ENCODE measurements at regions of chr3 and their contacts with region 1.

Region 1: GRCh38 chr3:183766745-183767606 is 58.4 kb downstream of the MAP6D1 start:
- DNase-seq: peak in 9 of 10 donors; percentile 66 to 86 (median 74)
- H3K4me3 ChIP-seq: peak overlapping the region in 1 of 59 donors; percentile 10
- H3K27ac ChIP-seq: peak overlapping the region in 46 of 59 donors; percentile 0 to 80 (median 58)
- H3K27me3 ChIP-seq: no peaks in the 10 kb centered on the region
- CTCF ChIP-seq: peak; percentile 66 to 93 (median 84)

Region 2: DNA sequence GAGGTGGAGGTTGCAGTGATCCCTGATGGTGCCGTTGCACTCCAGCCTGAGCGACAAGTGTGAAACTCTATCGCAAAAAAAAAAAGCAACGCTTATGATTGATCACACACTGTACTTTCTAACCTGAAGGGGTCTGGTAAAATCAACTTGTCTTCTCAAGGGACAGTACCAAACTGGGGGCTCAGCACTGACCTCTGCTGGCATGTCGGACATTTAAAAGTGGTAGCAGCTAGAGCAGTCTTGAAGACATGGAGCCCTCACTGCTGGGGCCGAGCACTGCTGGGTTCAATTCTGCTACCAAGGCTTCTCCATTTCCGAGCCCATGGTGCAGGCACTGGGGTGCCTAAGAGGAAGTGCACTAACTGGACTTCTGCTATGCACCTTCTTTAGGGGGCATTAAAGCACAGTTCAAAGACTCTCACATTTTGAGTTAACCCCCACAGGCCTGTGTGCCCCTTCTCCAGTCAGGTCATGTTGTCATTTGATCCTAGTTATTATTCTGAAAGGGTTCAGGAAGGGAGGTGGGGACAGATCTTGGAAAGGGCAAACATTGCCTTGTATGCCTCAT is 578.0 kb before region 1 on chr3:
- intact Hi-C with region 1: loop called in 1 of 2 experiments (anchors 10 kb)
- DNase-seq: peak in 5 of 10 donors; percentile 19 to 60 (median 54)
- H3K4me3 ChIP-seq: no peak overlapping the region
- H3K27ac ChIP-seq: peak overlapping the region in 1 of 59 donors; percentile 7
- H3K27me3 ChIP-seq: no peaks in the 10 kb centered on the region
- CTCF ChIP-seq: peak in 50 of 56 donors; percentile 11 to 57 (median 40)

Region 3: DNA sequence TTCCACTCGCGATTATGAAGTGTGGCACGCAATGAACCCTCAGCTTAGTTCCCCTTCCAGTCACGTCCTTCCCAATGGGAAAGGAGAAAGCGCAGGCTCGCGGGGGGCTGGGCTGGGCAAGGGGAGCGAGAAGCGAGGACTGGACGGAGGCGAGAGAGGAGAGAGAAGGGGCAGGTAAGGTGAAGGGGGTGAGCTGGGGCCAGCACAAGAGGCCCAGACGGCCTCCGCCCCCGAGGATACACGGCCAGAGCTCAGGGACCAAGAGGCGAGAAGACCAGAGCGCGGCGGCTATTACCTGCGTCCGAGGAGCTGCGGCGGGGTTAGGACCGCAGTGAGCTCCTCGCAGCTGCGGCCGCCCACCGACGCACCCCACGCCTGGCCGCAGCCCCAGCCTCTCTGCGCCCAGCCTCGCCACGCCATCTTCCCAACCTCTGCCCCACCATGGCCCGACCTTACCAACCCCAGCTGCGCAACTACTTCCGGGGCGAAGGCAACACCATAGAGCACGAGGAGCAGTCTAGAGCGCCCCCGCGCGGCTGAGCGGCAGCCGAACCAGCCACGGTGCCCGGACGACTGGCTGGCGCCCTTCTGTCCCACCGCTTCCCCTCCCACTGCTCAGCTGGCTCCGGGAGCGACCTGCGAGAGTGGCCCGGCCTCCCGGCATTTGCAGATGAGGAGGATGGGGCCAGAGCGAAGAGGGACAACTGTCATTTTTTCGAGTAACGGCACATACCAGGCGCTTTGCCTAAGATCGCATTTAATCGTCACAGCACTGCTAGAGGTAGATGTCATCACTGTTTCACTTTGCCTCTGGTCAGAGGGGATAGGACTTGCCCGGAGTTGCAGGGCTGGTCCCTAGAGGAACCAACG is 117.7 kb after region 1 on chr3 and contains the start of gene PARL:
- intact Hi-C with region 1: loop called in 1 of 2 experiments (anchors 5 kb)
- DNase-seq: peak; percentile 94 to 97 (median 96)
- H3K4me3 ChIP-seq: peak within 1 kb of the TSS; percentile 57 to 100 (median 94)
- H3K27ac ChIP-seq: peak within 1 kb of the TSS in 58 of 59 donors; percentile 4 to 91 (median 80)
- H3K27me3 ChIP-seq: no peaks in the 10 kb centered on the region
- CTCF ChIP-seq: peak; percentile 93 to 100 (median 98)
- total RNA-seq, gene PARL: 21.2 to 63.1 (median 43.9) TPM

Region 4: DNA sequence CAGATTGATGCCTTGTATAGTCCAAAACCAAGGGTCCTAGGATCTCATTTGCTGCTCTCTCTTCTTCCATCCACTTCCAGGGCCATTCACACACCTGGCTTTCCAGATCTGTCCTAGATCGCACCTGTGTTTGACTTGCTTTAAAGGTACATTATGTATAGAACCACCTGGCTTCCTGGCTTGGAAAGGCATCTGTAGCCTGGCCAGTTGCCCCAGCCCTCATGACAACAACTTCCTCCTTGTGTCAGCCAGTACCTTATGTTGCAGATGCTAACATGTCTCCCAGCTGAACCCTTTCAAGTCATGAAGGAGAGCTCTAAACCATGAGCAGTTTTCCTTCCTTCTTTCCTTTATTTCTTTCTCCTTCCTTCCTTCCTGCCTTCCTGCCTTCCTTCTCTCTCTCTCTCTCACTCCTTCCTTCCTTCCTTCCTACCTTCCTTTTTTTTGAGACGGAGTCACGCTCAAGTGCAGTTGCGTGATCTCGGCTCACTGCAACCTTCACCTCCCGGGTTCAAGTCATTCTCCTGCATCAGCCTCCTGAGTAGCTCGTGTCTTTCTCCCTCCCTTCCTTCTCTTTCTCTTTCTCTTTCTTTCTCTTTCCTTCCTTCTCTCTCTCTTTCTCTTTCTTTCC is 283.4 kb after region 1 on chr3:
- intact Hi-C with region 1: no loop called
- DNase-seq: no peak
- H3K4me3 ChIP-seq: no peak overlapping the region
- H3K27ac ChIP-seq: no peak overlapping the region
- H3K27me3 ChIP-seq: no peaks in the 10 kb centered on the region
- CTCF ChIP-seq: no peak

Measured in dorsolateral prefrontal cortex (tissue), 120 donors.